Colonic mucosa (tissue), 4 donors: ENCODE measurements at regions of chr3 and their contacts with region 1.

Region 1: DNA sequence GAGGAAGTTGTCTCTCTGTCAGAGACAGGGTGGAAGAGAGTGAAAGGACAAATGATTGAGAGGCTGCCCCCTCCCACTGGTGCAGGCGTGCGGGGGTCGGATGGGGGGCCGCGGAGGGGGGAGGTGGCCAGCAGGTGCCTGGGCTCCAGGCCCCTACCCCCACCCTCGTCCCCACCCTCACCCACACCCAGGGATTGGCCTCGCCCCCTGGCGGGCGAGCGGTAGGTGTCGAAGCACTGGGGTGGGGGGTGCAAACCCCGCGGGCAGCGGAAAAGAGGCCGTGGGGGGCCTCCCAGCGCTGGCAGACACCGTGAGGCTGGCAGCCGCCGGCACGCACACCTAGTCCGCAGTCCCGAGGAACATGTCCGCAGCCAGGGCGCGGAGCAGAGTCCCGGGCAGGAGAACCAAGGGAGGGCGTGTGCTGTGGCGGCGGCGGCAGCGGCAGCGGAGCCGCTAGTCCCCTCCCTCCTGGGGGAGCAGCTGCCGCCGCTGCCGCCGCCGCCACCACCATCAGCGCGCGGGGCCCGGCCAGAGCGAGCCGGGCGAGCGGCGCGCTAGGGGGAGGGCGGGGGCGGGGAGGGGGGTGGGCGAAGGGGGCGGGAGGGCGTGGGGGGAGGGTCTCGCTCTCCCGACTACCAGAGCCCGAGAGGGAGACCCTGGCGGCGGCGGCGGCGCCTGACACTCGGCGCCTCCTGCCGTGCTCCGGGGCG is at the start of gene KAT2B:
- DNase-seq: peak; percentile 85
- H3K4me3 ChIP-seq: peak within 1 kb of the TSS; percentile 73
- H3K27ac ChIP-seq: peak within 1 kb of the TSS; percentile 95
- H3K4me1 ChIP-seq: peaks cover 8% of the 10 kb centered on the region
- H3K27me3 ChIP-seq: no peaks in the 10 kb centered on the region
- CTCF ChIP-seq: peak; percentile 68
- total RNA-seq, gene KAT2B: 8.5 to 25.9 TPM

Region 2: DNA sequence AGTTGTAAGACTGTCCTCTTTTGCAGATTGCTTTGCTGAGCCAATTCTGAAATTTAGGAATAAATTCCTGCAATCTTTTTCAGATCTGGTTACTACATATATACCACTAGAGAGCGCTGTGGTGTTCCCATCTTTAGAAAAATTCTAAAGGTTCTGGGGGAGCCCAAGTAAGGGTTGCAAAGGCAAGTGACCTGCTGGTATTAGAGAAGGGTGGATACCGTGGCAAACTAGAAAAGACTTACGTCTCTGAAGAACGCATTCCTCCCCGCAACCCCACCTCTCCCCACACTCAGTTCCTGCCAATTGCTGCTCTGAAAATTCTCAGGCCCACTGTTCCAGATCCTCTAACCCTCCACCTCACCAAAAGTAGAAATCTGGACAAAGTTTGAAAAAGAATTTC is 154.5 kb before region 1 on chr3:
- intact Hi-C with region 1: loop called (anchors 5 kb)
- DNase-seq: no peak
- H3K4me3 ChIP-seq: no peak overlapping the region
- H3K27ac ChIP-seq: no peak overlapping the region
- H3K4me1 ChIP-seq: peaks cover 4% of the 10 kb centered on the region
- H3K27me3 ChIP-seq: no peaks in the 10 kb centered on the region
- CTCF ChIP-seq: peak; percentile 23

Region 3: DNA sequence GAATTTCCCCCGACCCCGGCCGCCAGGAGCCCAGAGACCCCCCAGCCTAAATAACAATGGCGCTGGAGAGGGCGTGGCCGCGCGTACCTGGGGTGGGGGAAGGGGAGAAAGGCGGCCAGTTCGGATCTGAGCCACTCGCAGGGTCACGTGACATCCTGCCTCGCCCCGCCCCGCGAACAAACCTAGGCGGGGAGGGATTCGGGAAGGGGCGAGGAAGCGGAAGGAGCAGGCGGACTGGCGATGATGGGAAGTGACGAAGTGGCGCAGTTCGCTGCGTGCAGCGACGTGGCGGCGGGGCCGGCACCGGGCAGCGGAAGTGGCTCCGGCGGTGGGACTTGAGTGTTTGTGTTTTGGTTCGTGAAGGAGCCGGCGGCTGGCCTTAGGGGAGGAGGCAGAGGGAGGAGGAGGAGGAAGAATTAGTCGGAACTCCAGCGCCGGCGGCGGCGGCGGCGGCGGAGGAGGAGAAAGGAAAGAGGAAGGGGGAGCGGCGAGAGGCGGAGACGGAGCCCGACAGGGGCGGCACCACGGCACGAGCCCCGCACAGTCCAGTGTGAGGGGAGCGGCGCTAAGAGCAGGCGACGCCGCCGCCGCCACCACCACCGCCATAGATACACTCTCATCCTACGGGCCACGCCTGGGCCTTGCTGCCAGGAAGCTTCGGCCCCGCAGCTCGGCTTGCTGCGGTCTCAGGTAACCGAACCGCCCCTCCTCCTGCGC is 92.9 kb before region 1 on chr3 and contains the start of gene RAB5A:
- intact Hi-C with region 1: loop called (anchors 5 kb)
- DNase-seq: peak; percentile 99
- H3K4me3 ChIP-seq: peak within 1 kb of the TSS; percentile 88
- H3K27ac ChIP-seq: peak within 1 kb of the TSS; percentile 99
- H3K4me1 ChIP-seq: peaks cover 7% of the 10 kb centered on the region
- H3K27me3 ChIP-seq: no peaks in the 10 kb centered on the region
- CTCF ChIP-seq: no peak
- total RNA-seq, gene RAB5A: 40.4 to 87.1 TPM

Region 4: DNA sequence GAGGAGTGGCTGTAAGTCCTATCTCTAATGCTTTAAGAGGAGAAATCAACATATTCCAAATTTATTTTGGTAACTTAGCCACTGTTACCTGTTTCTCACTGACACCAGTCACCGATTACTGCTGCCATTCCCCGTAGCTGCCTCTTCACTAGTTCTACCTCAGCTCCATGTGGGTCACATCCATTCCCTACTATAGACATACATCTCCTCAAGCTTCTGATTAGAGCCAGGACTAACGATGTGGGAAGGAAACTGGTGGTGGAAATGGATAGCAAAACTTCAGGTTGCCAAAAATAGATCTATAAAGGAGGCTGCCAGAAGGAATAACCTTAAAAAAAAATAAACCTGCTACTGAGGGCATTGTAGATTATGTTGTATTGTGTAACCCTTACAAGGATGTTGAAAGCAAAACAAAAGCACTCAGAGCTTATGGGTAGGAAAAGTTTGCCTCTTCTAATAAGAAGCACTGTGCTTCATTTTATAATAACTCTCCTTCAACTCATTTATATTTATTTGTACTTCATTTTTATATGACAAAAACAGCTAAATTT is 56.3 kb after region 1 on chr3:
- intact Hi-C with region 1: no loop called
- DNase-seq: no peak
- H3K4me3 ChIP-seq: no peak overlapping the region
- H3K27ac ChIP-seq: no peak overlapping the region
- H3K4me1 ChIP-seq: no peaks in the 10 kb centered on the region
- H3K27me3 ChIP-seq: no peaks in the 10 kb centered on the region
- CTCF ChIP-seq: no peak

Region 5: GRCh38 chr3:20288050-20288449 is 248.1 kb after region 1 on chr3:
- intact Hi-C with region 1: no loop called
- DNase-seq: no peak
- H3K4me3 ChIP-seq: no peak overlapping the region
- H3K27ac ChIP-seq: no peak overlapping the region
- H3K4me1 ChIP-seq: no peaks in the 10 kb centered on the region
- H3K27me3 ChIP-seq: no peaks in the 10 kb centered on the region
- CTCF ChIP-seq: no peak